Lower leg skin (tissue), 4 donors: ENCODE measurements at regions of chr6 and their contacts with region 1.

Region 1: GRCh38 chr6:158522616-158523015 is 37.3 kb upstream of the TMEM181 start:
- DNase-seq: no peak
- H3K4me3 ChIP-seq: no peak overlapping the region
- CTCF ChIP-seq: no peak
- POLR2A ChIP-seq: no peak

Region 2: GRCh38 chr6:158506577-158506976 is 16.0 kb before region 1 on chr6:
- intact Hi-C with region 1: loop called (anchors 1 kb)
- DNase-seq: no peak
- H3K4me3 ChIP-seq: no peak overlapping the region
- CTCF ChIP-seq: no peak
- POLR2A ChIP-seq: no peak